ENCODE measurements at regions of chr13 and their contacts with region 1.

Region 1: GRCh38 chr13:20127577-20128466 is 33.0 kb downstream of the GJA3 start:
- DNase-seq: peak; percentile 47
- H3K4me3 Mint-ChIP-seq: peak overlapping the region; percentile 60
- H3K27ac Mint-ChIP-seq: no peak overlapping the region
- H3K4me1 Mint-ChIP-seq: no peaks in the 10 kb centered on the region
- H3K27me3 Mint-ChIP-seq: peaks cover 23% of the 10 kb centered on the region

Region 2: GRCh38 chr13:19984430-19985218 is 143.2 kb before region 1 on chr13:
- CTCF ChIA-PET with region 1: interaction called, 4 read pairs
- intact Hi-C with region 1: loop called (anchors 1 kb)
- DNase-seq: no peak
- H3K4me3 Mint-ChIP-seq: no peak overlapping the region
- H3K27ac Mint-ChIP-seq: no peak overlapping the region
- H3K4me1 Mint-ChIP-seq: peaks cover 35% of the 10 kb centered on the region
- H3K27me3 Mint-ChIP-seq: no peaks in the 10 kb centered on the region